Activated B cell treated with CpG ODN at 0.5 μM for 24 hours (primary cell): ENCODE measurements at regions of chr3 and their contacts with region 1.

Region 1: GRCh38 chr3:130892759-130893375 is 1.0 kb upstream of the ATP2C1 start:
- DNase-seq: no peak
- ATAC-seq: peak; percentile 43
- H3K4me3 Mint-ChIP-seq: peak overlapping the region; percentile 95
- H3K27ac Mint-ChIP-seq: peak overlapping the region; percentile 99
- H3K4me1 Mint-ChIP-seq: peaks cover 31% of the 10 kb centered on the region
- H3K27me3 Mint-ChIP-seq: peaks cover 1% of the 10 kb centered on the region
- CTCF ChIP-seq: peak; percentile 30

Region 2: DNA sequence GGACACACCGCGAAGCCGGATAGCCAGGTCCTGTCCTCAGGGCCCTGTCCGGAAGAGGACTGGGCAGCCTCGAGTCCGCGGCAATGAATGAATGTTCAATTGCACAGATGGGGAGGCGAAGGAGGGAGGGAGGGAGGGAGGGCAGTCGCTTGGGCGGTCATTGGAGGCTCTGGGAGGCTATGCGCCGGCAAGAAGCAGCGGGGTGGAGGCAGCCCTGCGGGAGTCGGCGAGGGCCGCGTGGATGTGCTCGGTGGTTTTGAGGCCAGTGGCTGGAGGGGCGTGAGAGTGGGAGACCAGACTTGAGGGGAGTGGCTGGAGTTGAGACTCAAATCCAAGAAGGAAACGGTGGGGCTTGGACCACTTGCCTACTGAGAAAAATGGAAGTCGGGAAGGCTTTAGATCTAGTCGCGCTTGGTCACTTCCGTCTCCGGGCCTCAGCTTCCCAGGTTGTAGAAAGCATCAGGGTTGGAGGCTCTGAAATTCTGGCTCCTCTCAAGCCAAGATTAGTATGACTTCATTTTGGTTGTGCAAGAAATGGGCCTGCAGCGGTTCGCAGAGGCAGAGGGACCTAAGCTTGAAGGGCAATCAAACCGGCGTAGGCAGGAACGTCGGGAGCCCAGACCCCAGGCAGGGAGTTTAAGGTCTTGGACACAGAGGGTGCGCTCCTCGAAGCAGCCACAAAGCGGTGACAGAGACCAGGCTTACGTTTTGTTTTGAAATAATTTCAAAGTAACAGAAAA is 1265.3 kb before region 1 on chr3:
- CTCF ChIA-PET with region 1: no interaction called
- POLR2A ChIA-PET with region 1: no interaction called
- intact Hi-C with region 1: loop called (anchors 5 kb)
- DNase-seq: peak; percentile 48
- ATAC-seq: peak; percentile 65
- H3K4me3 Mint-ChIP-seq: peak overlapping the region; percentile 93
- H3K27ac Mint-ChIP-seq: peak overlapping the region; percentile 76
- H3K4me1 Mint-ChIP-seq: peaks cover 21% of the 10 kb centered on the region
- H3K27me3 Mint-ChIP-seq: no peaks in the 10 kb centered on the region
- CTCF ChIP-seq: no peak

Region 3: DNA sequence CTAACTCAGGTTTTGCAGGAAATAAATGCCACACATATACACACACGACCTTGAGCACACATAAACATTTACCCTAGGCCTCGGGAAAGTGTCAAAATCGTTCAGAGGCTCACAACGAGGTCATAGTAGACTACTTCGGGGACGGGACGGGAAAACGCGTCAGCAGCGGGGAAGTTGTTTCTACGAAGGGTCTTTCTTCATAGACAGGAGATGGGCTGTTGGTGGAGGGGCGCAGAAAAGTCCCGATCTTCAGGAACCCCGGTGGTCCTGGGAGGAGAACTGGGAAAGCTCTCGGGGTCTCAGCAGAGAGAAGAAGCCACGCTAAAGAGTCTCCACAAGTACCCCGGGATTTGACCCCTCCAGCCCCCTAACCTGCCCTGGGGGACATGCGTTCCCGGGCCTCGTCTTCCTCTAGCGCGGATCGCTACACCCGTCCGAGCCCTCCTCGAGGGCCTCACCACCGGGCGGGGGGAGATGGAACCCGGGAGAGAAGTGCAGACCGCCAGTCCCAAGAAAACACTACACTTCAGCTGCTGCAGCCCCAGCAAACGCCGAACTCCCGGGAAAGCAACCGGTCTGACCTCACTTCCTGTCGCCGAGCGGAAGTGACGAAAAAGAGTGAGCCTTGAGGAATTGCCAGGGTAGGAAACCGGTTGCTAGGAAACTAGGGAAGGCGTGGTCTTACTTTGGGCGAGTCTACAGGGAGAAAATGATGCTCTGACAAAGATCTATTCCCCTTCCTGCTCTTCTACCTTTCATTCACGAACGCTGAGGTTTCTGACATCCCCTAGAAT is 146.4 kb before region 1 on chr3 and contains the start of gene PIK3R4:
- CTCF ChIA-PET with region 1: interaction called, 6 read pairs
- POLR2A ChIA-PET with region 1: interaction called, 42 read pairs
- intact Hi-C with region 1: loop called (anchors 1 kb)
- DNase-seq: peak; percentile 82
- ATAC-seq: peak; percentile 80
- H3K4me3 Mint-ChIP-seq: peak within 1 kb of the TSS; percentile 87
- H3K27ac Mint-ChIP-seq: peak within 1 kb of the TSS; percentile 91
- H3K4me1 Mint-ChIP-seq: peaks cover 53% of the 10 kb centered on the region
- H3K27me3 Mint-ChIP-seq: no peaks in the 10 kb centered on the region
- CTCF ChIP-seq: no peak
- total RNA-seq, gene PIK3R4: 22.1 and 32.4 TPM in 2 replicates

Region 4: DNA sequence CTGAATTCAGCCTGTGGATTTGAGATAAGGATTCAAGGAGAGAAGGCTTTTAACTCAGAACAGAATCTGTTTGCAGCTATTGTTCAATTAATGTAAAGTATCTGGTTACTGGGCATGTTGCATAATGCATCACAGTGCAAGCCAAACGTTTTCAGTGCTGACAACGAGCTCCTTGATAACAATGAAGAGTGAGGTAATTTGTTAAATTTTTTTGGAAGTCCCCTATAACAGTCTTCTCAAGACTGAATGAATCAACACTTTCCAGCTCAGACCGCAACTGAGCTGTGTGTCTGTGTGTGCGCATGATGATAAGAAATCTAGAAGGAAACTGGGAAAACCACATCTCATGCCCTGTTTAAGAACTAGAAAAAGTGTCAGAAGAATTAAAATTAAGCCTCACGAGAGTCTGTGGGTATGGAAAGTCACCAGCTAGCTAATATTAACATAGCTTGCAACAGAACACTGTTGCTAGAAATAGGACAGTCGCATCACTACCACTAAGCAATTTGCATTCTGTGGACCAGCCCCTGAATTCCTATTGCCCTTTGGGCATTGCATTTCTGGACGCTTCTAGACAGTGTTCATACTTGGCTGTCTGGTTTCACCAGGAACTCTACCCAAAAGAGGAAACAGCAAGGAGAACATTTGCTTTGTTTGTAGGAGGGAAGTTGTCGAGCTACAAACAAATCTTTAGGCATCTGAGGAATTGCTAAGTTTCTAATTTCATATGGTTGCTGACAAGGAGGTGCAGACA is 42.6 kb before region 1 on chr3:
- CTCF ChIA-PET with region 1: no interaction called
- POLR2A ChIA-PET with region 1: interaction called, 11 read pairs
- intact Hi-C with region 1: loop called (anchors 1 kb)
- DNase-seq: no peak
- ATAC-seq: peak; percentile 80
- H3K4me3 Mint-ChIP-seq: peak overlapping the region; percentile 39
- H3K27ac Mint-ChIP-seq: peak overlapping the region; percentile 65
- H3K4me1 Mint-ChIP-seq: peaks cover 13% of the 10 kb centered on the region
- H3K27me3 Mint-ChIP-seq: peaks cover 3% of the 10 kb centered on the region
- CTCF ChIP-seq: no peak

Region 5: GRCh38 chr3:130925628-130926027 is 32.8 kb after region 1 on chr3:
- CTCF ChIA-PET with region 1: interaction called, 8 read pairs
- POLR2A ChIA-PET with region 1: interaction called, 28 read pairs
- intact Hi-C with region 1: loop called (anchors 1 kb)
- DNase-seq: peak; percentile 49
- ATAC-seq: peak; percentile 89
- H3K4me3 Mint-ChIP-seq: peak overlapping the region; percentile 41
- H3K27ac Mint-ChIP-seq: peak overlapping the region; percentile 65
- H3K4me1 Mint-ChIP-seq: peaks cover 55% of the 10 kb centered on the region
- H3K27me3 Mint-ChIP-seq: no peaks in the 10 kb centered on the region
- CTCF ChIP-seq: no peak

Region 6: GRCh38 chr3:131381444-131382291 is 488.8 kb after region 1 on chr3 and contains the start of gene NUDT16:
- CTCF ChIA-PET with region 1: no interaction called
- POLR2A ChIA-PET with region 1: interaction called, 10 read pairs
- intact Hi-C with region 1: loop called (anchors 1 kb)
- DNase-seq: peak; percentile 98
- ATAC-seq: peak; percentile 98
- H3K4me3 Mint-ChIP-seq: peak within 1 kb of the TSS; percentile 97
- H3K27ac Mint-ChIP-seq: peak within 1 kb of the TSS; percentile 92
- H3K4me1 Mint-ChIP-seq: peaks cover 24% of the 10 kb centered on the region
- H3K27me3 Mint-ChIP-seq: no peaks in the 10 kb centered on the region
- CTCF ChIP-seq: no peak
- total RNA-seq, gene NUDT16: 15.8 TPM in 2 replicates

Region 7: GRCh38 chr3:132405188-132405587 is 1512.3 kb after region 1 on chr3:
- CTCF ChIA-PET with region 1: no interaction called
- POLR2A ChIA-PET with region 1: no interaction called
- intact Hi-C with region 1: loop called (anchors 5 kb)
- DNase-seq: no peak
- ATAC-seq: no peak
- H3K4me3 Mint-ChIP-seq: no peak overlapping the region
- H3K27ac Mint-ChIP-seq: no peak overlapping the region
- H3K4me1 Mint-ChIP-seq: peaks cover 21% of the 10 kb centered on the region
- H3K27me3 Mint-ChIP-seq: no peaks in the 10 kb centered on the region
- CTCF ChIP-seq: no peak